ENCODE measurements at regions of chr1 and their contacts with region 1.

Region 1: DNA sequence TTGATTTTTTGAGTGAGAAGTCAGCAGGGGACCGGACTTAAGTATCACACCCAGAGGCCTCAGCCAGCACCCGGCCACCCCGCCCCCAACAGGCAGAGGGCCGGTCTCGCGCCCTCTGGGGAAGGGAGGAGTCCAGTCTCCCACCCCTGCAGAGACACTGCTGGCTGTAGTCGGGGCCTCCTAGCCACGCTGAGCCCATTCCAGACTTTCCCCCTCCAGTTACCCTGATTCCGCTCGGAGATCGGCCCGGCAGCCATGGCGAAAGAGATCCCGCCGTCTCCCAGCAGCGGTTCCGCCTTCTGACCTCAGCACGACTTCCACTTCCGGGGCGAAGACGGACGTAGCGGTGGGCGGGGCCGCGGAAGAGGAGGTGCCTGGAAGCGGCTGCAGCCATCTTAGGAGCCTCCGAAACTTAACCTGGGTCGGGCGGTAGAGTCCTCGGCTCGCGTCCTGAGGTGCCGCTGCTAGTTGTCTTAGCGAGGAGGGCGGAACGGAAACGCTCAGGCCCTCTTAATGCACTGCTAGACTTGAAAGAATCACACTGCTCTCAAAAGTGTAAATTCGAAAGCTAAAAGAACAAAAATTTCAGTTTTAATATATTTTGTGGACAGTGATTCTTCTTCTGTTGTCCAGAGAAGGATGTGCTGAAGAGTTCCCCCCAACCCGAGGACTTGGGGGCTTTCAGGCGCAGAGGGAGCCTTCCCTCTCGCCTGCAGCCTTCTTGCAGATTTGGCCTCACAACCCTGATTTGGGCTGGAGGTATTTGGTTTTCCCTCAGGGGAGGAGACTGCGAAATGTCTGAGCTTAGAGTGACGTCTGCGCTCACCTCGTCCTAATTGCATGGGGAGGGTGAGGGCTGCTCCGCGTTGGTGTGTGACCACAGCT is at the start of gene SF3B4:
- DNase-seq: peak; percentile 92 to 95 (median 93)
- H3K4me3 ChIP-seq: peak within 1 kb of the TSS; percentile 76 to 90 (median 85)
- H3K4me3 Mint-ChIP-seq: peak within 1 kb of the TSS; percentile 93 to 95
- H3K27ac ChIP-seq: peak within 1 kb of the TSS; percentile 95
- H3K27ac Mint-ChIP-seq: peak within 1 kb of the TSS; percentile 92 to 100 (median 98)
- H3K4me1 ChIP-seq: peaks cover 56 to 69% of the 10 kb centered on the region in 2 donors
- H3K4me1 Mint-ChIP-seq: peaks cover 62% of the 10 kb centered on the region
- H3K27me3 ChIP-seq: no peaks in the 10 kb centered on the region
- H3K27me3 Mint-ChIP-seq: peaks cover 0 to 3% (median 0%) of the 10 kb centered on the region in 3 donors
- CTCF ChIP-seq: no peak
- polyA plus RNA-seq, gene SF3B4: 52.2 to 78.6 (median 64.6) TPM

Region 2: GRCh38 chr1:149886396-149887195 is 41.1 kb before region 1 on chr1:
- intact Hi-C with region 1: loop called in 1 of 2 experiments (anchors 2 kb)
- DNase-seq: peak; percentile 97 to 99 (median 98)
- H3K4me3 ChIP-seq: peak overlapping the region; percentile 59 to 99 (median 79)
- H3K4me3 Mint-ChIP-seq: no peak overlapping the region
- H3K27ac ChIP-seq: peak overlapping the region; percentile 96 to 97
- H3K27ac Mint-ChIP-seq: no peak overlapping the region
- H3K4me1 ChIP-seq: peaks cover 32 to 39% of the 10 kb centered on the region in 2 donors
- H3K4me1 Mint-ChIP-seq: peaks cover 7% of the 10 kb centered on the region
- H3K27me3 ChIP-seq: no peaks in the 10 kb centered on the region
- H3K27me3 Mint-ChIP-seq: peaks cover 0 to 2% (median 0%) of the 10 kb centered on the region in 3 donors
- CTCF ChIP-seq: no peak

Region 3: DNA sequence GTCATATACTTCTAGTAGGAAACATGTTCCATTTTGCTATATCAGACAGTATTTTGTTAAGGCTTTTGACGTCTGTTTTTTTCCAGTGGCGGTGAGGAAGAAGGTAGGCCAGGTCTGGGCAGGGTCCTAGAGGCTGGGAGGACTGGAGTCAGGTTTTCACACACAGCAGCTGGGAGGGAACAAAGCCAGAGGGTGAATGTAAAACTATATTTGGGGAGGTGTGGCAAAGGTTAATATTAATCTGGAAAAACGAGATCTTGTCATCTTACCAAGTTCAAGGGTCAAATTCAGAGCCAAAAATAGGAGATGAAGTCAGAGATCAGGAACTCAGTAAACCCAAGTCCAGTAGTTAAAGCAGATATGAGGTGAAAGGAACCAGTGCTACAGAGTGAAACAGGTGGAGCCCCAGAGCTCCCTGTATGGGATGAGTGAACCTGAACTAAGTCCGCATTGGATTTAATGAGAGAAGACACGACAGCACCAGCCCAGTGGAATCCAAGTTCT is 93.5 kb after region 1 on chr1:
- intact Hi-C with region 1: no loop called
- DNase-seq: no peak
- H3K4me3 ChIP-seq: no peak overlapping the region
- H3K4me3 Mint-ChIP-seq: peak overlapping the region in 1 of 2 donors; percentile 75
- H3K27ac ChIP-seq: no peak overlapping the region
- H3K27ac Mint-ChIP-seq: no peak overlapping the region
- H3K4me1 ChIP-seq: no peaks in the 10 kb centered on the region
- H3K4me1 Mint-ChIP-seq: peaks cover 6% of the 10 kb centered on the region
- H3K27me3 ChIP-seq: peaks cover 91 to 99% of the 10 kb centered on the region in 2 donors
- H3K27me3 Mint-ChIP-seq: peaks cover 85 to 95% (median 89%) of the 10 kb centered on the region in 3 donors
- CTCF ChIP-seq: no peak